ENCODE measurements at regions of chr20 and their contacts with region 1.

Region 1: DNA sequence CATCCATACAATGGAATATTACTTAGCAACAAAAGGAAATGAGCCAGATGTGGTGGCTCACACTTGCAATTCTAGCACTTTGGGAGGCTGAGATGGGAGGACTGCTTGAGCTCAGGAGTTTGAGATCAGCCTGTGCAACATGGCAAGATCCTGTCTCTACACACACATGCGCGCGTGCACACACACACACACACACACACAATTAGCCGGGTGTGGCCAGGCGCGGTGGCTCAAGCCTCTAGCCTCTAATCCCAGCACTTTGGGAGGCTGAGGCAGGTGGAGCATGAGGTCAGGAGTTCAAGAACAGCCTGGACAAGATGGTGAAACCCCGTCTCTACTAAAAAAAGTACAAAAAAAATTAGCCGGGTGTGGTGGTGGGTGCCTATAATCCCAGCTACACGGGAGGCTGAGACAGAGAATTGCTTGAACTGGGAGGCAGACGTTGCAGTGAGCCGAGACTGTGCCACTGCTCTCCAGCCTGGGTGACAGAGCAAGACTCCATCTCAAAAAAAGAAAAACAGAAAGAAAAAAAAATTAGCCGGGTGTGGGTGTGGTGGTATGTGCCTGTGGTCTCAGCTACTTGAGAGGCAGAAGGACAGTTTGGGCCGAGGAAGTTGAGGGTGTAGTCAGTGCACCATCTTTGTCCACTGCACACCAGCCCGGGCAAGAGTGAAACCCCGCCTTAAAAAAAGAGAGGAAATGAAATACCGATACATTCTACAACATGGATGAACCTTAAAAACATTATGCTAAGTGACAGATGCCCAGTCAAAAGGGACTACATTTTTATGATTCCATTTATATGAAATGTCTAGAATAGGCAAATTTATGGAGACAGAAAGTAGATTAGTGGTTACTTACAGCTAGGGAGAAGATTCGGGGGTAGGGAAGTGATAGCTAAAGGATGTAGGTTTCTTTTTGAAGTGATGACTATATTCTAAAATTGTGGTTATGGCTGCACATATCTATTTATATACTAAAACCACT is 52.5 kb downstream of the RBL1 start:
- DNase-seq: peak; percentile 45 to 61 (median 52)
- H3K4me3 ChIP-seq: peak overlapping the region; percentile 5 to 51
- H3K4me3 Mint-ChIP-seq: peak overlapping the region; percentile 87 to 98 (median 93)
- H3K27ac ChIP-seq: peak overlapping the region; percentile 53
- H3K27ac Mint-ChIP-seq: peak overlapping the region; percentile 88 to 99 (median 96)
- H3K4me1 ChIP-seq: peaks cover 28% of the 10 kb centered on the region
- H3K4me1 Mint-ChIP-seq: peaks cover 13 to 33% (median 23%) of the 10 kb centered on the region in 4 donors
- H3K27me3 ChIP-seq: no peaks in the 10 kb centered on the region
- H3K27me3 Mint-ChIP-seq: no peaks in the 10 kb centered on the region

Region 2: GRCh38 chr20:37071481-37071911 is 28.2 kb after region 1 on chr20:
- CTCF ChIA-PET with region 1: interaction called, 4 read pairs
- POLR2A ChIA-PET with region 1: interaction called, 14 read pairs
- intact Hi-C with region 1: no loop called
- DNase-seq: peak; percentile 8 to 58 (median 32)
- H3K4me3 ChIP-seq: no peak overlapping the region
- H3K4me3 Mint-ChIP-seq: peak overlapping the region in 7 of 8 donors; percentile 18 to 77 (median 65)
- H3K27ac ChIP-seq: peak overlapping the region; percentile 29
- H3K27ac Mint-ChIP-seq: peak overlapping the region; percentile 82 to 95 (median 88)
- H3K4me1 ChIP-seq: peaks cover 36% of the 10 kb centered on the region
- H3K4me1 Mint-ChIP-seq: peaks cover 15 to 35% (median 28%) of the 10 kb centered on the region in 4 donors
- H3K27me3 ChIP-seq: no peaks in the 10 kb centered on the region
- H3K27me3 Mint-ChIP-seq: no peaks in the 10 kb centered on the region